ENCODE measurements at regions of chr17 and their contacts with region 1.

Region 1: DNA sequence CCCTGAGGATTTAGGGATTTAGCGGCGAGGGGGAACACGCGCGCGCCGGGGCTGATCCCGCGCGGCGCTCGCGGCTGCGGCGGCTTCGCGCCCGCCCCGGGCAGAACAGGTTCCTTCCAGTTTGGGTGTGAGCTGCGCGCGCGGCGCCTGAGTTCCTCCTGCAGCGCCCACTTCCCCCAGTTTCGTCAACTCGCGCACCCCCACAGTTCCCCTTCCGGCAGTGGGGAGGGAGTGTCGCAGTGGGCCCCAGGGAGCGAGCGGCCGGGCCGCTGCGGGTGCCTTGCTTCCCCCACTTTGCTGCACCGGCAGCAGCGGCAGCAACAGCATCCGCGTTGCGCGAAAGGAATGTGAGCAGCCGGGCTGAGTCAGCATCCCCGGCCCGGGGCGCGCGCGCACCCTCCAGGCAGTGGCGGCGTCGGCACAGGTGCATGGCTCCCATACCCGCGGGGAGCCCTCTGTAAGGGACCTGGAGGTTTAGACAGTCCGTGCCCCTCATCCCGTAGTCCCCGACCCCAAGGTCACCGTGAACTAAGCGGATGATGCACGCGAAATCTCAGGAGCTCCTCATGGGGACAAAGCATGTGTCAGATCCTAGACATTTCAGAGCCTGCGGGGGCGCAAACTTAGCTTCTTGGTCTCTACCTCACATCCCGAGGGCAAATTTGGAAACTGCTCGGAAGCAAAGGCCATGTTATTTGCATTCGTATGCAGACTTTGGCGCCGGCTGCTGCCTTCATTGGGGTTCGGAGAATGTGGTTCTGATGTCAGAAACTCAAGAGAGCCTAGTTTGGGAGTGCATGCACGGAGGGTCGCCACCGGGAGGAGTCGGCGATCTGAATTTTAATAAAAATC is 775 bp downstream of the ARSG start:
- DNase-seq: peak; percentile 97
- H3K4me3 Mint-ChIP-seq: peak overlapping the region; percentile 81
- H3K27ac Mint-ChIP-seq: peak overlapping the region; percentile 95
- H3K4me1 Mint-ChIP-seq: peaks cover 71% of the 10 kb centered on the region
- H3K27me3 Mint-ChIP-seq: no peaks in the 10 kb centered on the region

Region 2: GRCh38 chr17:68011199-68011665 is 280.8 kb before region 1 on chr17:
- CTCF ChIA-PET with region 1: no interaction called
- POLR2A ChIA-PET with region 1: no interaction called
- DNase-seq: peak; percentile 71
- H3K4me3 Mint-ChIP-seq: peak overlapping the region; percentile 62
- H3K27ac Mint-ChIP-seq: no peak overlapping the region
- H3K4me1 Mint-ChIP-seq: peaks cover 6% of the 10 kb centered on the region
- H3K27me3 Mint-ChIP-seq: peaks cover 4% of the 10 kb centered on the region

Region 3: DNA sequence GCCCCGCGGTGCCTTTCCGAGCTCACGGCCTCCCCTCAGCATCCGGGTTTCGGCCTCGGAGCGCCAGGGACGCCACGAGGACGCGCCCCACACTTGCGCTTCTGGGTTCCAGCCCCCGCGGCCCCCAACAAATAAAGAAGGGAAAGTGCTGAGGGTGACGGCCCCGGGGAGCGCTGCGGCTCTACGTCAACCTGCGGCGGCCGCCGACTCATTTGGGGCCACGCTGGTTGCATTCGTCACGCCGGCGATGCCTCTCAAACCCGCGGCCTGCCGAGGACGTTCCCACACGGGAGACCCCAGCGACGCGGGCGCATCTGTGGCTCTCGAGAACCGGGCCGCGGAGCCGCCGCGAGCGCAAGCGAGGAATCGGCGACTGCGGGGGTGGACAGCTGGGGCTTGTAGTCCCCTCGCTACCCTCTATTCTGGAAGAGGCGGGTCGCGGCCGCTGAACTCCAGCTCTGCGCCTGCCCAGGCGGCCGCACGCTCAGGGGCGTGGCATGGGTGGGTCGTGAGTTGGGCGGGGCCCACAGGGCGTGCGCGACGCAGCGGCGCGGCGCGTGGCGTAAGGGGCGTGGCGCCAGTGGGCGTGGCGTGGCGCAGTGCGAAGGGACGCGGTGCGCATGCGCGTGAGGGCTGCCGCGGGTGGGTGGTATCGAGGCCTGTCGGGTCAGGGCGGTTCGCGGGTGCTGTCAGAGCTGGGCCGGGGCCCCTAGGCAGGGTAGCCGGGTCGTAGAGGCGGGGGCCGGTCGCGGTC is 44.4 kb before region 1 on chr17 and contains the start of gene AMZ2:
- CTCF ChIA-PET with region 1: no interaction called
- POLR2A ChIA-PET with region 1: interaction called, 61 read pairs
- DNase-seq: peak; percentile 97
- H3K4me3 Mint-ChIP-seq: peak within 1 kb of the TSS; percentile 85
- H3K27ac Mint-ChIP-seq: peak within 1 kb of the TSS; percentile 90
- H3K4me1 Mint-ChIP-seq: peaks cover 42% of the 10 kb centered on the region
- H3K27me3 Mint-ChIP-seq: no peaks in the 10 kb centered on the region
- total RNA-seq, gene AMZ2: 106 to 121 TPM

Region 4: DNA sequence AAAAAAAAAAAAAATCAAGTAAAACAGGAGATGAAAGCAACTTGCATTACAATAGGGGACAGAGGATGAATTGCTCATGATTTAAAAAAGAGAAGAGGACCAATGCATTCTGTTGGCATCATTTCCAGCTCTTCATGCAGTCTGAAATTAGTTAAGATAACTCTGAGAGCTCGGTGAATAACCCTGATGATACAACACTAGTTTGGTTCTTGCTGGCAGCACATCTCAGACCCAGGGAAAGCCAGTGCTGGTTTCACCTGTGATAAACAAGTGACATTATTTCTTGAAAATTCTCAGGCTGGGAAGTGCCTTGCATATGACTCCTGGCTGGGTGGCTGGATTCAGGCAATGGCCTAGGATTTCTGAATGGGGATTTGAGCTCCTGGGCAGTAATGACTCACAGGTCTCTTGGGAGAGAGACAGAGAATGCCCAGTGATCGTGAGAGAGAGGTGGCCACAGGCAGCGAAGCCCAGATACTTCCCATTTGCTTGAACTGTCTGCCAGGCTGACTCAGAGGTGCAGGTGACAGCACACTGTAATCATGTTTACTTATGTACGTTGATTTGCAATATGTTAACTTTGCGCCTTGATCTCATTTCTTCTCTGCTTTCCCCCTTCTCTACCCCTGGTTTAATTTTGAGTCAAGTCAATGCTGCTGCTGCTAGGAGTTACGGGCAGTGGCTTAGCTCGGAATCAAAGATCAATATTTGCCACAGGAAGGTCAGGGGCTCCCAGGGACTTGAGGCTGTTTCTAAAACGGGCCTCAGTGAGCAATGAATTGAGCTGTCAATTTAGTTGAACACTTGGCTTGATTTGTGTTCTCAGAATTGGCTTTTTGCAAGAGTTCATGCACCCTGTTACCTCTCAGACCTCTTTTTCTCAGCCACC is 26.3 kb after region 1 on chr17:
- CTCF ChIA-PET with region 1: interaction called, 8 read pairs
- POLR2A ChIA-PET with region 1: interaction called, 74 read pairs
- DNase-seq: no peak
- H3K4me3 Mint-ChIP-seq: no peak overlapping the region
- H3K27ac Mint-ChIP-seq: no peak overlapping the region
- H3K4me1 Mint-ChIP-seq: peaks cover 40% of the 10 kb centered on the region
- H3K27me3 Mint-ChIP-seq: no peaks in the 10 kb centered on the region

Region 5: GRCh38 chr17:68346448-68346847 is 54.4 kb after region 1 on chr17:
- CTCF ChIA-PET with region 1: interaction called, 12 read pairs
- POLR2A ChIA-PET with region 1: interaction called, 158 read pairs
- DNase-seq: peak; percentile 88
- H3K4me3 Mint-ChIP-seq: peak overlapping the region; percentile 67
- H3K27ac Mint-ChIP-seq: peak overlapping the region; percentile 96
- H3K4me1 Mint-ChIP-seq: peaks cover 78% of the 10 kb centered on the region
- H3K27me3 Mint-ChIP-seq: no peaks in the 10 kb centered on the region

Region 6: GRCh38 chr17:68398691-68399637 is 106.9 kb after region 1 on chr17:
- CTCF ChIA-PET with region 1: interaction called, 20 read pairs
- POLR2A ChIA-PET with region 1: interaction called, 53 read pairs
- DNase-seq: peak; percentile 49
- H3K4me3 Mint-ChIP-seq: no peak overlapping the region
- H3K27ac Mint-ChIP-seq: peak overlapping the region; percentile 79
- H3K4me1 Mint-ChIP-seq: peaks cover 40% of the 10 kb centered on the region
- H3K27me3 Mint-ChIP-seq: no peaks in the 10 kb centered on the region

Measured in activated CD4-positive, alpha-beta memory T cell treated with anti-CD3 and anti-CD28 coated beads, Interleukin-2, amount 10 ng/mL, durations not matched to agents 7 days and 5 days (primary cell).